Motor neuron (in vitro differentiated cells): ENCODE measurements at regions of chr10 and their contacts with region 1.

Region 1: GRCh38 chr10:58064714-58065528 is 202.8 kb downstream of the IPMK start:
- ATAC-seq: peak in 7 of 8 experiments; percentile 21 to 72 (median 48)
- H3K4me3 ChIP-seq: no peak overlapping the region
- H3K27ac ChIP-seq: no peak overlapping the region
- H3K4me1 ChIP-seq: peaks cover 0 to 3% of the 10 kb centered on the region in 2 donors

Region 2: DNA sequence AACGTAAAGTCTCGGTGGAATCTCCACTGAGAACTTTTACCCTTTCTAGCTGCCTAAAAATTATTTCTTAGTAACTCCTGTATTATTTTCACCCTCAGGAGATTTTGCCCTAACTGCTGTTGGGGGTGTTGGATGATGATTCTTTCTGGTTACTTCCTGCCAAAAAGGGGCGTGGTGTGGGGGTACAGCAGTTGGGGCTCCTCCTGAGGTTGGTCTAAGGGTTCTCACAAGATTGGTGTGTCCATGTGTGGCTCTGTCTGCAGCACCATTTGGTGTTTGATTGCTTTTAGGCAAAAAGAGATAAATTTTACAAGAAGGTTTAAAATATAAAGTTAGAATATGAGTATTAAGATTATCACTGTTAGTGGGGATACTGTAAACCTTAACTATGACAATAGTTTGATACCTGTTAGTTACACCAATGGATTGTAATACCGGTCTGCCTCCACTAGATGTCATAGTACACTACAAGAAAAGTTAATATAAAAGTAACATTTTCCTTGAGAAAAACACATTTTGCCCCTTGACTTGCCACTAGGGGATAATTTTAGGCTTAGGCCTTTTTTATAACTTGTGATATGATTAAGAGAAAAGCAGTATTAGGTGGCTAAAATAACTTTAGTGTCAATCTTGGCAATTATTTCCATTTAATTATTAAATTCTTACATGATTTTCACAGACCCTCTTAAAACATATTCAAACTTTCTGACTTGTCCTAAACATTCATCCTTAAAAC is 725.9 kb before region 1 on chr10:
- in situ Hi-C with region 1: loop called in 2 of 9 experiments (anchors 25 kb)
- ATAC-seq: peak in 1 of 8 experiments; percentile 38
- H3K4me3 ChIP-seq: no peak overlapping the region
- H3K27ac ChIP-seq: no peak overlapping the region
- H3K4me1 ChIP-seq: peaks cover 0 to 3% of the 10 kb centered on the region in 2 donors

Region 3: GRCh38 chr10:57716886-57717285 is 348.0 kb before region 1 on chr10:
- in situ Hi-C with region 1: loop called in 1 of 9 experiments (anchors 25 kb)
- ATAC-seq: peak in 1 of 8 experiments; percentile 46
- H3K4me3 ChIP-seq: no peak overlapping the region
- H3K27ac ChIP-seq: no peak overlapping the region
- H3K4me1 ChIP-seq: no peaks in the 10 kb centered on the region

Region 4: DNA sequence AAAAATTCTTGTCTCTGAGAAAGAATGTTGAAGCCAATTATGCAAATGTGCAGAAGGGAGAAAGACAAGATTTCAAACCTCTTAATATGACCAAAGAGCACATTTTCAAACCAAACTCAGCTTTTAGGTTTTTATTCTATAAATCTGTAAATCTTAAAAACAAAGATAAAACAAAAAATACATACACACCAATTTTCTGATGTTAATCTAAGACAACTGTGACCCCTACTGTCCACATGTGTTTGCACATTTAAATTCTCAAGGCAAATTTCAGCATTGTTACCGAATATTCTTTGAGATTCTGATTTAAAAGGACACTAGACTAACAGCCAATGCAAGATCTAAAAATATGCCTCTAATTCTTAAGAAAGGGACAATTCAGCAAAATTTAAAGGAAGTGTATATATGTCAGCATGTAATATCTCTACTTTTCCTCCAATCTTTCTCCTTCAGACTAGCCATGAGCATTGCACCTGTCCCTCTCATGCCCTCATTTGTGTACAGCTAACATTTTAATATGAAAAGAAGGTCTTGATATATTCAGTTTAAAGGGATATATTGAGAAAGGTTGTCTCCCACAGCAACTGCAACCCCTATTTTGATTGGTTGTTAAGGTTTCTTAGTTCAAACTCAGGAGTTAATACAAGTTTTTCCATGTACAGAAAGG is 215.1 kb before region 1 on chr10:
- in situ Hi-C with region 1: loop called in 1 of 9 experiments (anchors 25 kb)
- ATAC-seq: no peak
- H3K4me3 ChIP-seq: no peak overlapping the region
- H3K27ac ChIP-seq: no peak overlapping the region
- H3K4me1 ChIP-seq: peaks cover 0 to 3% of the 10 kb centered on the region in 2 donors

Region 5: GRCh38 chr10:57898237-57898636 is 166.7 kb before region 1 on chr10:
- in situ Hi-C with region 1: no loop called
- ATAC-seq: no peak
- H3K4me3 ChIP-seq: no peak overlapping the region
- H3K27ac ChIP-seq: no peak overlapping the region
- H3K4me1 ChIP-seq: no peaks in the 10 kb centered on the region